Right cardiac atrium (tissue), 5 donors: ENCODE measurements at regions of chr7 and their contacts with region 1.

Region 1: GRCh38 chr7:73329861-73330581 is 2.1 kb downstream of the FKBP6 start:
- DNase-seq: no peak
- ATAC-seq: peak; percentile 71 to 73
- H3K4me3 ChIP-seq: no peak overlapping the region
- H3K27ac ChIP-seq: no peak overlapping the region
- H3K4me1 ChIP-seq: no peaks in the 10 kb centered on the region
- H3K27me3 ChIP-seq: no peaks in the 10 kb centered on the region

Region 2: DNA sequence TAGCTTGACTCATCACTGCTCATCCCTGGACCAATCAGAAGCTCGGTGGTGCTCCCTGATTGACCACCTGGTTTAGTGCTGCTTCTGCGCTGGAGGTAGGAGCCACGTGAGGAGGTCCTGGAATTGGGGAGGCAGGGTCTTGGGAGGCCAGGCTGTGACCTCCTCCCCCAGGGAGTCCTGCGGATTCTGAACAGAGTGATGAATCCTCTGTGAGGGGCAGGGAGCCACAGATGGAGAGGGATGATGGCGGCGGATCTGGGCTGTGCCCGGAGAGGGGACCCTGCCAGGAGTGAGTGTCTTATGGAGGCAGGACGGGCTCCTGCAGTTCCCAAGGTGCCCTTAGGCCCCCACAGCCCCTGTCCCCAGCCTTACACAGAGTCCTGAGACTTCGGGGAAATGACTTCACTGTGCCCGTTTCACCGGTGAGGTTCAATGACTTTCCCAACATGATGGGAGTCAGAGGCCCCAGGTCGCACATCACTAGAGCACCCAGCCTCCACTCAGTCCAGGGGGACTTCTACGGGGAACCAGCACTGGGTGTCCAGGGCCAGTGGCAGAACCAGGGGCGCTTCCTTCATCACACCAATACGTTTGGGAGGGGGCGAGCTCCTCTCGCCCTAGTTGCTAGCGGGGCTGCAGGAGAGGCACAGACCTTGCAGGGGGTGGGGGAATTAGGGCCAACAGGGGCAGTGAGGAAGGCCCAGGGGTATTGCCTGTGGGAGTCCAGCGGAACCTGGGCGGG is 46.8 kb after region 1 on chr7:
- intact Hi-C with region 1: no loop called
- DNase-seq: no peak
- ATAC-seq: peak in 1 of 2 donors; percentile 20
- H3K4me3 ChIP-seq: no peak overlapping the region
- H3K27ac ChIP-seq: no peak overlapping the region
- H3K4me1 ChIP-seq: no peaks in the 10 kb centered on the region
- H3K27me3 ChIP-seq: no peaks in the 10 kb centered on the region

Region 3: DNA sequence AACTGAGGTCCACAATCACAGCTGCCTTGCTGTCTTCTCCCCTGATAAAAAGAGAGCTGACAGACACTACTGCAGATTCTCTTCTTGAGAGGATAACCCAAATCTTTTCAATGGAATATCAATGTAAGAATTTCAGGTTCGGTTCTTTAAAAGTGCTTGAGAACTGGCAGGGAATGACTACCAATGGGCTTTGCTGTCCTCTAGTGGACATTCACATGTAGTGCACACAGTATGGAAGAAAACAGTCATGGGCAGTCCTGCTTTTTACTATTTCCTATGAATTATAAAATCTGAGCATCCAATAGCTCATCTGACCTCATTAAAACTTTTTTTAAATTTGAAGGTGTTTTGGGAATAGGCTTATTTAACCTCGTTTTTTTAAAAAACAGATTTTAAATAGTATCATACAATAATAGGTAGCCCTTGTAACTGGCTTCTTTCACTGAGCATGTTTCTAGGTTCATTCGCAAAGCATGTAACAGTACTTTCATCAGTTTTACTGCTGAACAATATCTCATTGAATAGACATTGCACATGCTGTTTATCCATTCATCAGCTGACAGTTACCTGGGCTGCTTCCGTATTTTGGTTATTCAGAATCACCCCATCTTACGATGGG is 121.9 kb after region 1 on chr7:
- intact Hi-C with region 1: loop called in 1 of 4 experiments (anchors 10 kb)
- DNase-seq: no peak
- ATAC-seq: peak; percentile 65 to 69
- H3K4me3 ChIP-seq: no peak overlapping the region
- H3K27ac ChIP-seq: no peak overlapping the region
- H3K4me1 ChIP-seq: no peaks in the 10 kb centered on the region
- H3K27me3 ChIP-seq: no peaks in the 10 kb centered on the region